ENCODE measurements at regions of chr4 and their contacts with region 1.

Region 1: GRCh38 chr4:76388160-76388908 is 32.6 kb downstream of the CCDC158 start:
- DNase-seq: no peak
- H3K4me3 ChIP-seq: no peak overlapping the region
- H3K27ac ChIP-seq: no peak overlapping the region
- H3K4me1 ChIP-seq: no peaks in the 10 kb centered on the region
- CTCF ChIP-seq: no peak

Region 2: DNA sequence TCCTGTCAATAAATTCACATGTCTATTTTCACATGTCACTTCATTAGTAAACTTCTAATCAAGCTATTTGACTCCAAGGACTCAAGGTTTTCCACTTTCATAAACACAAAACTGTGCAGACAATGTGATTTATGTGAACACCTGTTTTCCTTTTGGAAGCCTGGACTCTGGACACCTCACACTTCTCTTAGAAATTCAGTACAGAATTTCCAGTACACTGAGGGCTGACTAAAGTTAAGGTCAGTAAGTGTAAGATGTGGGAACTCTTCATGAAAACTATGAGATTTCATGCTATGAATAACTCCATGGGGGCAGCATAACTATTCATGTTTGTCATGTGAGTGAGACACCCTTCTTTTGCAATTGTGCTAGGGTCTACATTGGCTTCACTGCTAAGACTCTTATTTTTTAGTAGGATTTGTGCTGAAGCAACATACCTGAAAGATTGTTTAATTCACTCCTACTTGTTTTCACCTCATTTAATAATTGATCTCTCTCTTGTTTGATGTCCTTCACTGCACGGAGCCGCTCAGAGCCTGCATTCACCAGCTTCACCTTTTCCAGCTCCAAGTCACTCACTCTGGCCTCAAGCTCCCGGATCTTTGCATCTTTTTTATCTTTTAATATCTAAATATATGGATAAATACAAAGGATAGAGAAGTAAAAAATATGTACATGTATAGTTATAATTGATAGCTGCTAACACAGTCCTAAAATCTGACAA is 26.5 kb before region 1 on chr4:
- CTCF ChIA-PET with region 1: no interaction called
- POLR2A ChIA-PET with region 1: no interaction called
- intact Hi-C with region 1: no loop called
- DNase-seq: no peak
- H3K4me3 ChIP-seq: no peak overlapping the region
- H3K27ac ChIP-seq: no peak overlapping the region
- H3K4me1 ChIP-seq: no peaks in the 10 kb centered on the region
- CTCF ChIP-seq: no peak

Region 3: GRCh38 chr4:76377911-76378310 is 10.4 kb before region 1 on chr4:
- CTCF ChIA-PET with region 1: no interaction called
- POLR2A ChIA-PET with region 1: interaction called, 11 read pairs
- intact Hi-C with region 1: no loop called
- DNase-seq: peak; percentile 4
- H3K4me3 ChIP-seq: no peak overlapping the region
- H3K27ac ChIP-seq: no peak overlapping the region
- H3K4me1 ChIP-seq: no peaks in the 10 kb centered on the region
- CTCF ChIP-seq: peak; percentile 69

Region 4: DNA sequence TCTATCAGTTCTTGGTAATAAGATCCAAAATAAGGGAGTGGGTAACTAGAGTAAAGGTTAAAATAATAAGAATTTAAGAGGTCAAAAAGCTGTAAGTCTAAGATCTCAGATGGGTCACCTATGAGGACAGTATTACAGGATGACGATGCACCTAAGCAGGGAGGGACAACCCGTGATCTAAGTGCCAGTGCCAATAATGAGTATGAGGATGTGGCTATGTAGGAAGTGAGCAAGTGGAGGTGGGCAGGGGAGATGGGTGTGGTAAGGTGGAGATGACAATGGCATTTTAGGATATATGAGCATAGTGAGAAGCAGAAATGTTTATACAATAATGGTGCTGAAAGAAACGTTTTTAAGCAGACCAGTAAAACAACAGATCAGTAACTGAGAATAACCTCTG is 13.3 kb after region 1 on chr4:
- CTCF ChIA-PET with region 1: no interaction called
- POLR2A ChIA-PET with region 1: no interaction called
- intact Hi-C with region 1: no loop called
- DNase-seq: no peak
- H3K4me3 ChIP-seq: no peak overlapping the region
- H3K27ac ChIP-seq: no peak overlapping the region
- H3K4me1 ChIP-seq: no peaks in the 10 kb centered on the region
- CTCF ChIP-seq: no peak